ENCODE measurements at regions of chr13 and their contacts with region 1.

Region 1: DNA sequence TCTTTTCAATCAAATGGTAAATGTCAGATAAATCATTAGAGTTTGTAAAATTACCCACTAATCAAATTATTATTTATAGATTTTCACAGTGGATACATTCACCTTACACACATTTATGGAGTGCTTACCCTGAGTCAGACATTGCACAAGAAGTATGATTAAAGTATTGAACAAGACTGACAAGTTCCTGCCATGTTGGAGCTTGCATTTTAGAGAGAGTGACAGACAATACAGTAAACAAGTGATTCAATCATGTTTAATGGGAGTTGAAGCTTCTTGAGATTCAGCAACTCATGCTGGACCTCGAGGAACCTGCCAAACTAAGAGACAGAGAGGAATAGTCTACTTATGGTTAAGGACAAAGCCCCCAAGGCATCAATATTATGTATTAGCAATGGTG is 487.8 kb downstream of the PCDH17 start:
- DNase-seq: no peak
- ATAC-seq: no peak
- H3K4me3 ChIP-seq: no peak overlapping the region
- H3K27ac ChIP-seq: no peak overlapping the region
- H3K4me1 ChIP-seq: no peaks in the 10 kb centered on the region
- H3K27me3 ChIP-seq: no peaks in the 10 kb centered on the region
- CTCF ChIP-seq: no peak
- EP300 ChIP-seq: no peak
- POLR2A ChIP-seq: no peak
- RAD21 ChIP-seq: no peak

Region 2: GRCh38 chr13:58144616-58145015 is 25.3 kb after region 1 on chr13:
- CTCF ChIA-PET with region 1: no interaction called
- POLR2A ChIA-PET with region 1: no interaction called
- in situ Hi-C with region 1: no loop called
- intact Hi-C with region 1: loop called (anchors 1 kb)
- DNase-seq: no peak
- ATAC-seq: no peak
- H3K4me3 ChIP-seq: no peak overlapping the region
- H3K27ac ChIP-seq: no peak overlapping the region
- H3K4me1 ChIP-seq: no peaks in the 10 kb centered on the region
- H3K27me3 ChIP-seq: no peaks in the 10 kb centered on the region
- CTCF ChIP-seq: no peak
- EP300 ChIP-seq: no peak
- POLR2A ChIP-seq: no peak
- RAD21 ChIP-seq: no peak

Region 3: GRCh38 chr13:58300974-58301681 is 181.8 kb after region 1 on chr13:
- CTCF ChIA-PET with region 1: no interaction called
- POLR2A ChIA-PET with region 1: no interaction called
- in situ Hi-C with region 1: no loop called
- intact Hi-C with region 1: no loop called
- DNase-seq: no peak
- ATAC-seq: peak; percentile 45; the same call in 1 of the 3 replicates
- H3K4me3 ChIP-seq: no peak overlapping the region
- H3K27ac ChIP-seq: no peak overlapping the region
- H3K4me1 ChIP-seq: peaks cover 17% of the 10 kb centered on the region
- H3K27me3 ChIP-seq: no peaks in the 10 kb centered on the region
- CTCF ChIP-seq: no peak
- EP300 ChIP-seq: no peak
- POLR2A ChIP-seq: no peak
- RAD21 ChIP-seq: no peak